ENCODE measurements at regions of chr14 and their contacts with region 1.

Region 1: GRCh38 chr14:54509546-54510501 is at the start of gene CGRRF1:
- DNase-seq: peak; percentile 98
- H3K4me3 ChIP-seq: peak within 1 kb of the TSS; percentile 90 to 97 (median 96)
- H3K27ac ChIP-seq: peak within 1 kb of the TSS; percentile 63
- H3K4me1 ChIP-seq: peaks cover 8% of the 10 kb centered on the region
- H3K27me3 ChIP-seq: no peaks in the 10 kb centered on the region
- CTCF ChIP-seq: peak in 1 of 2 donors; percentile 49
- total RNA-seq, gene CGRRF1: 14.3 to 16.4 TPM

Region 2: GRCh38 chr14:54427871-54428270 is 82.0 kb before region 1 on chr14:
- CTCF ChIA-PET with region 1: no interaction called
- dilution Hi-C with region 1: loop called (anchors 5 kb)
- in situ Hi-C with region 1: no loop called
- intact Hi-C with region 1: no loop called
- DNase-seq: no peak
- H3K4me3 ChIP-seq: no peak overlapping the region
- H3K27ac ChIP-seq: no peak overlapping the region
- H3K4me1 ChIP-seq: no peaks in the 10 kb centered on the region
- H3K27me3 ChIP-seq: no peaks in the 10 kb centered on the region
- CTCF ChIP-seq: no peak

Region 3: GRCh38 chr14:54440873-54441868 is 68.7 kb before region 1 on chr14 and contains the start of gene CNIH1:
- CTCF ChIA-PET with region 1: no interaction called
- dilution Hi-C with region 1: no loop called
- in situ Hi-C with region 1: no loop called
- intact Hi-C with region 1: loop called (anchors 2 kb)
- DNase-seq: peak; percentile 91
- H3K4me3 ChIP-seq: peak within 1 kb of the TSS; percentile 65 to 78 (median 76)
- H3K27ac ChIP-seq: peak within 1 kb of the TSS; percentile 90
- H3K4me1 ChIP-seq: peaks cover 29% of the 10 kb centered on the region
- H3K27me3 ChIP-seq: no peaks in the 10 kb centered on the region
- CTCF ChIP-seq: peak; percentile 85 to 92
- total RNA-seq, gene CNIH1: 184 to 196 TPM

Region 4: DNA sequence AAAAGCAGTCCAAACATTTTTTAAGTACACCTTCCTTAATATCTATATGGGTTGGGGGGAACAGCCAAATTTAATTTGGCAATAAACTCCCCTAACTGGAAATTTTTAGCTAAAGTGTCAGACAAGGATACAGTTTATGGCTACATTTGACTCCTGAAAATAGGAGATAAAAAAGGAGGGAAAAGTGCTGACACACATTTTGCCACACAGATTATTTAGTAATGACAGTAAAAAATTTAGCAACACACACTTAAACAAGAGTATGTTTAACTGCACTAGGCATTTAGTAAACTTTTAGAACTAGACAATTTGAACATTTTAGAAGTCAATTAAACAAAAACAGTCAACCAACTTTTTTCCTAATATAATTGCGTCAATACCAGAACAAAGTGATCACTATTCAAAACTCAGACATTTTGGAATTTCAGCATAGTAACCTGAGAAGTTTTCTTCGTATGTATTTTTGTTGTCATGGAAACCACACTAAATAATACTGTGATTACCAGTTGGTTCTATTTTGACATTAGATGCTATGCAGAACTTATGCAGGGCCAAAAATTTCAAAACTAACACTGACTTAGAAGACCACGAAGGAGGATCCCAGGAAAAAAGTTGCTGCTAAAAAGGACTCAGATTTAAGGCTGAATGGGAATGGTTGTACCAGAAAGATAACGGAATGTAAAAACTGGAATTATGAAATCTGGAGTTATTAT is 34.5 kb before region 1 on chr14:
- CTCF ChIA-PET with region 1: no interaction called
- dilution Hi-C with region 1: no loop called
- in situ Hi-C with region 1: no loop called
- intact Hi-C with region 1: no loop called
- DNase-seq: no peak
- H3K4me3 ChIP-seq: no peak overlapping the region
- H3K27ac ChIP-seq: peak overlapping the region; percentile 9
- H3K4me1 ChIP-seq: no peaks in the 10 kb centered on the region
- H3K27me3 ChIP-seq: no peaks in the 10 kb centered on the region
- CTCF ChIP-seq: no peak

Region 5: DNA sequence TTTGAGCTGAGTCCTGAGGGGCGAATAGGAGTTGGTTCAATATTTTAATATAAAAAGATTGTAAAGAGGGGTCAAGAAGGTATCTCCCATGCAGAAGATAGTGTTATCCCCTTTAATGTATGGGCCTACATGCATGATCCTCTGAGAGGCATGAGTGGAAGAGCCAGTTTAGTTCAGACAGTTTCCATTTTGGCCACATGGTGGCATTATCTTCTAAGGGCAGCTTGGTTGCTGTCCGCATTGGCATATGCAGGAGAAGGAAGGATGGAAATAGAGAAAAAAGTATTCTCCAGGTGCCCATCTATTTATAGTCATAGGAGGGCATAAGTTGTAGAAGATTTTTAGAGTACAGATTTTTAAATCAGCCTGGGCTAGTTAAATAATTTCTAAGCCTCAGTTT is 62.5 kb after region 1 on chr14:
- CTCF ChIA-PET with region 1: no interaction called
- dilution Hi-C with region 1: no loop called
- in situ Hi-C with region 1: no loop called
- intact Hi-C with region 1: no loop called
- DNase-seq: peak; percentile 43
- H3K4me3 ChIP-seq: no peak overlapping the region
- H3K27ac ChIP-seq: no peak overlapping the region
- H3K4me1 ChIP-seq: peaks cover 33% of the 10 kb centered on the region
- H3K27me3 ChIP-seq: no peaks in the 10 kb centered on the region
- CTCF ChIP-seq: peak; percentile 61 to 66

Measured in mammary epithelial cell (primary cell).